ENCODE measurements at regions of chr19 and their contacts with region 1.

Region 1: GRCh38 chr19:58261968-58262921 is 16.5 kb upstream of the ZNF8 start:
- DNase-seq: no peak
- ATAC-seq: no peak
- H3K4me3 ChIP-seq: no peak overlapping the region
- H3K27ac ChIP-seq: no peak overlapping the region
- H3K4me1 ChIP-seq: no peaks in the 10 kb centered on the region
- H3K27me3 ChIP-seq: no peaks in the 10 kb centered on the region
- CTCF ChIP-seq: no peak
- POLR2A ChIP-seq: no peak

Region 2: GRCh38 chr19:58128041-58128685 is 134.1 kb before region 1 on chr19:
- intact Hi-C with region 1: loop called in 1 of 10 experiments (anchors 5 kb)
- DNase-seq: no peak
- ATAC-seq: no peak
- H3K4me3 ChIP-seq: no peak overlapping the region
- H3K27ac ChIP-seq: no peak overlapping the region
- H3K4me1 ChIP-seq: no peaks in the 10 kb centered on the region
- H3K27me3 ChIP-seq: no peaks in the 10 kb centered on the region
- CTCF ChIP-seq: no peak
- POLR2A ChIP-seq: no peak

Region 3: DNA sequence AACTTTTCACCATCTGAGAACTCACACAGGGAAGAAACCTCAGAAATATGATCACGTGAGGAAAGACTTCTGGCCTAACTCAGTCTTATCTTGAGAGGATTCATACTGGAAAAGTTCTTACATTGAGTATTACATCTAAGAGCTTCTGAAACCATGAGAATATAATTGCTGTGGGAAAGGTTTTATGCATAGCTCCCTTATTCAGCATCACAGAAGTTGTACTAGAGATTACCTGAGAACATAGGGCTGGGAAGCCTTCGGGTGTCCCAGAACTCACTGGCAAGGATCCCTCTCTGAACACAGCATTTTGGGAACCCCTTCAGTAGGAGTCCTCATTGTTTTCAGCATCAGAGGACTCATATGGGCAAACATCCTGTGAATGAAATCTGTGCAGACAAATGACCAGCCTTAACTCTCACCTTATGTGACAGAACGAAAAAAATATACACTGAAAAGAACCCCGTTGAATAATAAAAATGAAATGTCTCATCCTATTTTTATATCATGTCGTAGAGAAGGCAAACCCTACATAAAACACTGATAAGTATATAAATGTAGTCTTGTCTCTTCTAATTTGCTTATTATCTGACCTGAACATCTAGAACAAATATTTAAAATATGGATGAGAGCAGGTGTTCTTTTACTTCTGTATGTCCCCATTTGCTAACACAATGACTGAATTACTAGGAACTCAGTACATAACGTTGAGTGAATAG is 65.2 kb before region 1 on chr19:
- intact Hi-C with region 1: loop called in 5 of 10 experiments (anchors 5 to 10 kb)
- DNase-seq: no peak
- ATAC-seq: no peak
- H3K4me3 ChIP-seq: no peak overlapping the region
- H3K27ac ChIP-seq: no peak overlapping the region
- H3K4me1 ChIP-seq: no peaks in the 10 kb centered on the region
- H3K27me3 ChIP-seq: no peaks in the 10 kb centered on the region
- CTCF ChIP-seq: no peak
- POLR2A ChIP-seq: no peak

Region 4: GRCh38 chr19:58203814-58204475 is 58.3 kb before region 1 on chr19:
- intact Hi-C with region 1: loop called in 5 of 10 experiments (anchors 5 to 10 kb)
- DNase-seq: no peak
- ATAC-seq: peak in 1 of 4 donors; percentile 16
- H3K4me3 ChIP-seq: no peak overlapping the region
- H3K27ac ChIP-seq: no peak overlapping the region
- H3K4me1 ChIP-seq: no peaks in the 10 kb centered on the region
- H3K27me3 ChIP-seq: no peaks in the 10 kb centered on the region
- CTCF ChIP-seq: no peak
- POLR2A ChIP-seq: no peak

Region 5: DNA sequence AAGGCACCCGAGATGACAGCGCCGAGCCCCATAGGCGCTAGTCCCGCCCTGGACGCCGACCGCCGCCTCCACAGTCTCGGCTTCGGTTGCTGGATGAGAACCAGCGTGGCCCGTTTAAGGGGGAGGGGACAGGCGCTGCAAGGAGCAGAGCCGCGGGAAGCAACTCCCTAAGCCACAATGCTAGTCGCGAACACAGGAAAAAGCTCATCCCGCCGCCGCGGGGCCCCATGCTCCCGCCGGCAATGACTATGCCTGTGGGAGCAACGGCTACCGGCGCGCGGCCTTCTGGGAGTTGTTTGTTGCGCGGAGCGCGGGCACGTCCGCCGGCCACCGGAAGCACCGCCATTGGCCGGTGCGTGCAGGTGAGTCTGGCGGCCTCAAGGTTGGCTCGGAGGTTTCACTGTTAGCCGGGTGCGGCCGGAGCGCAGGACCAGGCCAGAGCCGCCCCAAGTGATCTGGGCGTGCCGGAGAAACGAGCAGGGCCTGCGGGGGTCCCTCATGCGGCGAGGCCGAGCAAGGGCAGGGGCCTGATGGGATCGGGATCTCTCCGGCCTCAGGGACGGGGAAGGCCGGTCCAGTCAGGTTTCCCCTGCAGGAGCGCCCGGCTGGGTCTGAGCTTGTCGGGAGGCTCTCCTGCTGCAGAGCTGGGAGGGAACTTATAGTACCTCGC is 33.5 kb before region 1 on chr19 and contains the start of gene ZNF544:
- intact Hi-C with region 1: no loop called
- DNase-seq: peak; percentile 80 to 89 (median 83)
- ATAC-seq: peak; percentile 91 to 99 (median 98)
- H3K4me3 ChIP-seq: peak within 1 kb of the TSS; percentile 75 to 97 (median 86)
- H3K27ac ChIP-seq: peak within 1 kb of the TSS; percentile 73 to 95 (median 88)
- H3K4me1 ChIP-seq: peaks cover 0 to 21% (median 15%) of the 10 kb centered on the region in 12 donors
- H3K27me3 ChIP-seq: no peaks in the 10 kb centered on the region
- CTCF ChIP-seq: peak in 4 of 12 donors; percentile 6 to 34 (median 13)
- POLR2A ChIP-seq: peak in 1 of 2 donors; percentile 19
- total RNA-seq, gene ZNF544: 20.8 to 38.7 (median 22.1) TPM

Region 6: GRCh38 chr19:58305065-58305931 is 43.1 kb after region 1 on chr19 and contains the start of gene ERVK3-1:
- intact Hi-C with region 1: no loop called
- DNase-seq: peak; percentile 96 to 98 (median 98)
- ATAC-seq: peak; percentile 99 to 100 (median 100)
- H3K4me3 ChIP-seq: peak within 1 kb of the TSS; percentile 50 to 94 (median 82)
- H3K27ac ChIP-seq: peak within 1 kb of the TSS; percentile 76 to 94 (median 88)
- H3K4me1 ChIP-seq: peaks cover 0 to 23% (median 13%) of the 10 kb centered on the region in 12 donors
- H3K27me3 ChIP-seq: no peaks in the 10 kb centered on the region
- CTCF ChIP-seq: peak in 6 of 12 donors; percentile 10 to 38 (median 16)
- POLR2A ChIP-seq: peak; percentile 7 to 87
- total RNA-seq, gene ERVK3-1: 12.8 to 39.2 (median 20.3) TPM

Measured in heart left ventricle (tissue), 16 donors.